H1 (cell line): ENCODE measurements at regions of chr20 and their contacts with region 1.

Region 1: GRCh38 chr20:9609887-9610502 is 95.6 kb downstream of the LAMP5 start:
- DNase-seq: peak; percentile 31 to 73
- H3K4me3 ChIP-seq: no peak overlapping the region
- H3K27ac ChIP-seq: no peak overlapping the region
- H3K4me1 ChIP-seq: peaks cover 0 to 2% (median 0%) of the 10 kb centered on the region in 4 experiments; a peak in 1 of 7 replicates
- H3K27me3 ChIP-seq: no peaks in the 10 kb centered on the region; a peak in 2 of 7 replicates
- CTCF ChIP-seq: peak in 2 of 3 experiments; percentile 49 to 64; a peak in 3 of 4 replicates
- EP300 ChIP-seq: no peak
- POLR2A ChIP-seq: no peak
- RAD21 ChIP-seq: peak; percentile 76 to 84

Region 2: DNA sequence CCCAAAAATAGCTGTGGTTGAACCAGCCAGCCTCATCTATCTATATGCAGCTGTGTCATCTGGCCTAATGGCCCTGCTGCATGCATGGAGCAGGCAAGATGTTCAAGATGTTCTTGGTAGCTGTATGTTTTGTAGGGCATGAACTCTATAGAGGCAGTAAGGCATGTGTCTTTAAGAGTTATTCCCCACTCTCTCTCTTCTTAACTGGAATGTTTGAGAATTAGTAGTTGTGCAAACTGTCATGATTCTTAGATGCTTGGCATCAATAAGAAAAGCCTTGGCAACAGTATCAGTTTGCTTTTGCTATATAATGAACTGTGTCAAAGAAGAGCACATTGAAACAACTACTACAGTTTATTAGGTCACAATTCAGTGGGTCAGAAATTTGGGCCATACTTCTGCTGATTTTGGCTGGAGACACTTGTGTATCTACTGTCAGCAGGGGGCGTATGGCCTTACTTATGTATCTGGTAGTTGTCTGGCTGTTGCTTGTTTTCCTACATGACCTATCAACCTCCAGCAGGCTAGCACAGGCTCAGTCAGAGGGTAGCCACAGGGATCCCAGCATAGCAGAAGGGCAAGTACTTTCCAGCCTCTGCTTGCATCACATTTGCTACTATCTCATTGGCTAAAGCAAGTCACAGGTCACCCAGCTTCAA is 151.7 kb before region 1 on chr20:
- CTCF ChIA-PET with region 1: interaction called, 89 read pairs
- POLR2A ChIA-PET with region 1: no interaction called
- DNase-seq: peak in 1 of 2 experiments; percentile 53
- H3K4me3 ChIP-seq: no peak overlapping the region
- H3K27ac ChIP-seq: no peak overlapping the region
- H3K4me1 ChIP-seq: no peaks in the 10 kb centered on the region
- H3K27me3 ChIP-seq: no peaks in the 10 kb centered on the region
- CTCF ChIP-seq: peak in 2 of 3 experiments; percentile 53 to 62; a peak in 3 of 4 replicates
- EP300 ChIP-seq: no peak
- POLR2A ChIP-seq: no peak
- RAD21 ChIP-seq: peak; percentile 54 to 56; a peak in 3 of 4 replicates

Region 3: DNA sequence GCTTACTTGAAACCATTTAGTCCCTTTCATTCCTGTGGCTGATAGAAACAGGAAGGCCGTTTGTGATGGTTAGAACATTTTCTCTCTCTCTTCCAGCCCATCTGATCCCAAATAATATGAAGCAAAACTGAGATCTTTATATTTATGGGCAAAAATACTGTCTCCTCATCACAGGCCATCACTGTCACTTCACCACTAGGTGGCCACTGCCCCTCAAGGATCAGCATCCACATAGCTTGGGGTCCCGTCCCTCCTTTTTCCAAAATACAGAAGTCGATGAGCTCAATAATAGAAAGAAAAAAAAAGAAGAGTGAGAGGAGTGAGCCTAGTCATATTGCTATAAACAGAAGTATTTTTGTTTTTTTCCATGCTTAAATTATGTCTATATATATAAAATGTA is 142.0 kb before region 1 on chr20:
- CTCF ChIA-PET with region 1: interaction called, 64 read pairs
- POLR2A ChIA-PET with region 1: no interaction called
- DNase-seq: no peak
- H3K4me3 ChIP-seq: no peak overlapping the region
- H3K27ac ChIP-seq: no peak overlapping the region
- H3K4me1 ChIP-seq: no peaks in the 10 kb centered on the region
- H3K27me3 ChIP-seq: no peaks in the 10 kb centered on the region
- CTCF ChIP-seq: peak; percentile 78 to 83 (median 80)
- EP300 ChIP-seq: no peak
- POLR2A ChIP-seq: no peak
- RAD21 ChIP-seq: peak; percentile 86 to 88

Region 4: DNA sequence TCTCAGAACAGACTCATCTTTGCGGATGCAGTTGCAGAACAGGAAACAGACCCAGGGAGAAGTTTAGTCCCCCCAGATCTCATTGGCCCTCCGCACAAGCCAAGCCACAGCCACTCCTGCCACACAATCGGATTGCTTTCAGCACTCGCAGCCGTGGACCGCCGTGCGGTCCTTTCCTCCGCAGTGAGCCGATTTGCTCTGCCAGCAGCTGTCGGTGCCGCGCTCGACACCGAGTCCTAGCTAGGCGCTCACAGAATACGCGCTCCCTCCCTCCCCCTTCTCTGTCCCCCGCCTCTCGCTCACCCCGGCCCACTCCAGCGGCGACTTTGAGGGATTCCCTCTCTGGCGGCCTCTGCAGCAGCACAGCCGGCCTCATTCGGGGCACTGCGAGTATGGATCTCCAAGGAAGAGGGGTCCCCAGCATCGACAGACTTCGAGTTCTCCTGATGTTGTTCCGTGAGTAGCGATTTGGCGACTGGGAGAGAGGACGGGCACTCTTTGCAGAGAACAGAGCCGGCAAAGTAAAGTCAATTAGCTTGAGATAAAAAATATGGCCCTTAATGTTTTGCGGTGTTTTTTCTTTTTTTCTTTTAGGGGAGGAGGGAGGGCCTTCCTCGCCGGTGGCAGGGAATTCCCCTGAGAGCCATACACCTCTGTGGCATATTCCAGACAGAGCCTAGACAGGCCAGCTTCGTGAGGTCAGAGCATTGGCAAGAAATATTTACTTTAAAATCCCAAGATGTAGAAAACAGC is 95.4 kb before region 1 on chr20 and contains the start of gene LAMP5:
- CTCF ChIA-PET with region 1: interaction called, 49 read pairs
- POLR2A ChIA-PET with region 1: no interaction called
- DNase-seq: peak in 1 of 2 experiments; percentile 80
- H3K4me3 ChIP-seq: peak within 1 kb of the TSS; percentile 42 to 63 (median 48); a peak in 7 of 8 replicates
- H3K27ac ChIP-seq: no peak within 1 kb of the TSS
- H3K4me1 ChIP-seq: peaks cover 2 to 28% (median 14%) of the 10 kb centered on the region in 4 experiments; a peak in 6 of 7 replicates
- H3K27me3 ChIP-seq: peaks cover 52 to 93% (median 73%) of the 10 kb centered on the region in 4 experiments
- CTCF ChIP-seq: no peak
- EP300 ChIP-seq: no peak
- POLR2A ChIP-seq: no peak
- RAD21 ChIP-seq: peak; percentile 1; a peak in 1 of 4 replicates
- total RNA-seq, gene LAMP5: 0.22 and 0.31 TPM in 2 replicates

Region 5: GRCh38 chr20:9555781-9556180 is 54.2 kb before region 1 on chr20:
- CTCF ChIA-PET with region 1: interaction called, 13 read pairs
- POLR2A ChIA-PET with region 1: no interaction called
- DNase-seq: no peak
- H3K4me3 ChIP-seq: no peak overlapping the region
- H3K27ac ChIP-seq: no peak overlapping the region
- H3K4me1 ChIP-seq: no peaks in the 10 kb centered on the region
- H3K27me3 ChIP-seq: no peaks in the 10 kb centered on the region
- CTCF ChIP-seq: no peak
- EP300 ChIP-seq: no peak
- POLR2A ChIP-seq: no peak
- RAD21 ChIP-seq: no peak

Region 6: DNA sequence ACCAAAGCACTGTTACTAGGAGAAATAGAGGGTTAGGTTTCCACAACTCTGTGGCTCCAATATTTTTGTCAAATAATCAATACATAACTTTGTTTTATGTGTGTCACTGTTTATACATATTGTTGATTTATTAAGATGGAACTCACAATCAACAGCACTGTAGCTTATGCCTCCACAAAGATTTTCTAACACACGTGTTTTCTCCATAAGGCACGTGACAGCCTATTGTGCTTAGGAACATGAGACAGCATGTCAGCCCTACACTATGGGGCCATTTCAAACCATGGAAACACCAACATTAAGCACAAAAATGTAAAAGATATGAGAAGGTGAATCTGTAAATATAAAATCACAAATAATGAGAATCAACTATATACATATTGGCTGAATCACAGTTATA is 101.9 kb after region 1 on chr20:
- CTCF ChIA-PET with region 1: no interaction called
- POLR2A ChIA-PET with region 1: no interaction called
- DNase-seq: no peak
- H3K4me3 ChIP-seq: no peak overlapping the region
- H3K27ac ChIP-seq: no peak overlapping the region
- H3K4me1 ChIP-seq: no peaks in the 10 kb centered on the region
- H3K27me3 ChIP-seq: no peaks in the 10 kb centered on the region
- CTCF ChIP-seq: no peak
- EP300 ChIP-seq: no peak
- POLR2A ChIP-seq: no peak
- RAD21 ChIP-seq: no peak